Natural killer cell (primary cell): ENCODE measurements at regions of chr2 and their contacts with region 1.

Region 1: GRCh38 chr2:29014811-29015421 is 33.8 kb downstream of the TOGARAM2 start:
- DNase-seq: peak; percentile 74 to 89
- ATAC-seq: peak; percentile 52 to 74 (median 56)
- H3K4me3 ChIP-seq: peak overlapping the region; percentile 34
- H3K4me3 Mint-ChIP-seq: peak overlapping the region; percentile 94
- H3K27ac ChIP-seq: peak overlapping the region; percentile 100
- H3K27ac Mint-ChIP-seq: peak overlapping the region; percentile 100
- H3K4me1 ChIP-seq: peaks cover 84% of the 10 kb centered on the region
- H3K4me1 Mint-ChIP-seq: peaks cover 78 to 84% of the 10 kb centered on the region in 2 donors
- H3K27me3 ChIP-seq: no peaks in the 10 kb centered on the region
- H3K27me3 Mint-ChIP-seq: no peaks in the 10 kb centered on the region
- CTCF ChIP-seq: peak; percentile 50

Region 2: GRCh38 chr2:28621172-28622100 is 393.5 kb before region 1 on chr2:
- intact Hi-C with region 1: loop called (anchors 10 kb)
- DNase-seq: peak; percentile 53 to 95
- ATAC-seq: peak; percentile 77 to 89 (median 81)
- H3K4me3 ChIP-seq: no peak overlapping the region
- H3K4me3 Mint-ChIP-seq: peak overlapping the region; percentile 78
- H3K27ac ChIP-seq: peak overlapping the region; percentile 92
- H3K27ac Mint-ChIP-seq: peak overlapping the region; percentile 91 to 94
- H3K4me1 ChIP-seq: peaks cover 66% of the 10 kb centered on the region
- H3K4me1 Mint-ChIP-seq: peaks cover 60 to 65% of the 10 kb centered on the region in 2 donors
- H3K27me3 ChIP-seq: no peaks in the 10 kb centered on the region
- H3K27me3 Mint-ChIP-seq: no peaks in the 10 kb centered on the region
- CTCF ChIP-seq: no peak

Region 3: DNA sequence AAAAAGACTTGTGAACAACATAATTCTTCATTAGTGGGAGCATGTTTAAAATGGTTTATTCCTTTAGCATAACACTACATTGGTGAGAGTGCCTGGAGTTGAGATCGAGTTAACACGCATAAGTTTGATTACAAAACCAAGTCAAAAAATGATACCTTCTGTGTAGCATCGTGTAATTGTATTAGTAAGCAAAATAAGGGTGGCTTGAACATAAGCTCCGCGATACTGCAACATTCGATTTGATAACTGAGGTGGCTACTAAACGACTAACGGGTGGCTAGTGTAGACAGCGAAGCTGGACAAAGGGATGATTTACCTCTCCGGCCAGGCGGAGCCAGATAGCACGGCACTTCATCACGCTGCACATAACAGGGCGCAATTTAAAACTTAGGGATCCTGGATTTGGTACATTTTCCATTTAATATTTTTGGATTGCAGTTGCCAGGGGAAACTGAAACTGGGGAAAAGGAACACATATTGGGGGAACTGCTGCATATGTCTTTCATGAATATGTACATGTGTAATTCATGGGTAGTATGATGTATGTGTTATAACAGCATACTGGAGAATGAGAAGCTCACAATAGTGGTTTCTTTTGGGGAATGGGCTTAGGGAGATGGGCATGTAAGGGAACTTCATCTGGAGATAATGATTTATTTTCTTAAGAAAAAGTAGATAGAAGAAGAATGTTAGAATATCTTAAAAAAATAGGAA is 70.2 kb before region 1 on chr2:
- intact Hi-C with region 1: no loop called
- DNase-seq: no peak
- ATAC-seq: no peak
- H3K4me3 ChIP-seq: no peak overlapping the region
- H3K4me3 Mint-ChIP-seq: no peak overlapping the region
- H3K27ac ChIP-seq: no peak overlapping the region
- H3K27ac Mint-ChIP-seq: no peak overlapping the region
- H3K4me1 ChIP-seq: no peaks in the 10 kb centered on the region
- H3K4me1 Mint-ChIP-seq: no peaks in the 10 kb centered on the region
- H3K27me3 ChIP-seq: no peaks in the 10 kb centered on the region
- H3K27me3 Mint-ChIP-seq: no peaks in the 10 kb centered on the region
- CTCF ChIP-seq: no peak

Region 4: DNA sequence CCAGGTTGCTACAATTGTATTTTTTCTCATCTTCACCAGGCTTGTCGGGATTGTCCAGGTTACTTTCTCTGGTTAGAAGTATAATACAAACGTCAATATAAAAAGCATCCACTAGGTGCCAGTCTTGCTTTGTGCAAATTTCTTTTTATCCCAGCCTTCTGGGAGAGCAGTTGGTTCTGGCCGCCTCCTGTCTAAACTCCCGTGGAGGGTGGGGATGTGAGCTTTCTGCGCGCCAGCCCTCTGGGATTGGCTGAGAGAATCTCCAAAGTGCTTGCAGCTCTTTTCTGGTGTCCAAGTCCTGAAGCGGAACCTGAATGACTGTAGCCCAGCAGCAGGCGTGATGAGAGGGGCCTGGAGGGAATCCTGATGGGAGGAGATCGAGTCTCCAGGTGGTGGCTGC is 56.2 kb before region 1 on chr2:
- intact Hi-C with region 1: loop called (anchors 1 kb)
- DNase-seq: peak; percentile 25 to 78
- ATAC-seq: peak; percentile 63 to 94 (median 74)
- H3K4me3 ChIP-seq: no peak overlapping the region
- H3K4me3 Mint-ChIP-seq: no peak overlapping the region
- H3K27ac ChIP-seq: no peak overlapping the region
- H3K27ac Mint-ChIP-seq: peak overlapping the region in 1 of 2 donors; percentile 25
- H3K4me1 ChIP-seq: peaks cover 6% of the 10 kb centered on the region
- H3K4me1 Mint-ChIP-seq: peaks cover 6 to 12% of the 10 kb centered on the region in 2 donors
- H3K27me3 ChIP-seq: no peaks in the 10 kb centered on the region
- H3K27me3 Mint-ChIP-seq: peaks cover 0 to 3% of the 10 kb centered on the region in 2 donors
- CTCF ChIP-seq: peak; percentile 82

Region 5: GRCh38 chr2:28981016-28981441 is 33.9 kb before region 1 on chr2 and contains the start of gene TOGARAM2:
- intact Hi-C with region 1: no loop called
- DNase-seq: no peak
- ATAC-seq: no peak
- H3K4me3 ChIP-seq: no peak within 1 kb of the TSS
- H3K4me3 Mint-ChIP-seq: no peak within 1 kb of the TSS
- H3K27ac ChIP-seq: no peak within 1 kb of the TSS
- H3K27ac Mint-ChIP-seq: peak within 1 kb of the TSS; percentile 9 to 51
- H3K4me1 ChIP-seq: peaks cover 2% of the 10 kb centered on the region
- H3K4me1 Mint-ChIP-seq: peaks cover under 1 to 6% of the 10 kb centered on the region in 2 donors
- H3K27me3 ChIP-seq: no peaks in the 10 kb centered on the region
- H3K27me3 Mint-ChIP-seq: no peaks in the 10 kb centered on the region
- CTCF ChIP-seq: no peak
- total RNA-seq, gene TOGARAM2: 25.9 to 53.2 (median 30.8) TPM

Region 6: DNA sequence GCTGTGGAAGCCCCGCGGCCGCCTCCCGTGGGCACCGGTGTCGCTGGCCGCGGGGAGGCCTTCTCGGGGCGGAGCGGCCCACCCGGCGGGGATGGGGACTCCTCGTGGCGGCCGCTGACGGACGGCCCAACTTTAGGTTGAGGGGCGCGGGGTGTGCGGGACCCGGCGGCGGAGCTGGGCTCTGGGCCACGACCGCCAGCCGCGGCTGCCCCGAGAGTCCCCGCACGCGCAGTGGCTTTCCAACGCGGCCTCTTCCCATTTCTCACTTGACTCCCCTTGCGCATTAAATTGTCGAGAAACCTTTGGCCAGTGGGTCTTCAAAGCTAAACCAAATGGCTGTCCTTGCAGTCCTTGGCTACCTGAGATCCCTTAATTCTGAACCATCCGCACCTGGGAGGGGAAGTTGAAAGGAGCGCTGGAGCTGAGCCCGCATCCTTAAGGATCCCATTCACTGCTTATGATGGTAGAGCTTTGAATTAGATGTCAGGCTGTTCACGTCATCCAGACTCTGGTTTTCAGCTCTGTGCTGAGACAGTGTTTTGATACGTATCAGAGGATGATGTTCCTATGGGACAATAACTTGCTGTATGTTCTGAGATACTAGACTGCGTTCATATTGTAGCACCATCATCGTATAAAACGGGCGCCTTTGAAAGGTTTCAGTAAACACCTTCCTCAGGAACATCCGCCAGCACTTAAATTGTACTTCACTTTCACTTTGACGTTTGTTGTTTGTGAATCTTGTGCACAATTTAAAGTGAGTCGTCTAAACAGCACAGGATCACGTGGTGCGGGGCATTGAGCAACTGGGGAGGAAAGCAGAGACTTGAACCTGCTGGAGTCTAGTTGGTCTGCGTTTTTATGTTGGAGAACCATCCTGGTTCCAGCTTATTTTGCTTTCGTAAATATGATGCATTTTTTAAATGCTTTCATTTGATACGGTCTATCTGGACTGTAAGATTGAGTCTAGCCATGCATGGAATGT is 101.2 kb after region 1 on chr2:
- intact Hi-C with region 1: loop called (anchors 1 kb)
- DNase-seq: peak; percentile 65 to 86
- ATAC-seq: peak; percentile 51 to 64 (median 59)
- H3K4me3 ChIP-seq: peak overlapping the region; percentile 88
- H3K4me3 Mint-ChIP-seq: peak overlapping the region; percentile 91
- H3K27ac ChIP-seq: peak overlapping the region; percentile 95
- H3K27ac Mint-ChIP-seq: peak overlapping the region; percentile 93
- H3K4me1 ChIP-seq: peaks cover 14% of the 10 kb centered on the region
- H3K4me1 Mint-ChIP-seq: peaks cover 45 to 59% of the 10 kb centered on the region in 2 donors
- H3K27me3 ChIP-seq: no peaks in the 10 kb centered on the region
- H3K27me3 Mint-ChIP-seq: peaks cover 0 to 9% of the 10 kb centered on the region in 2 donors
- CTCF ChIP-seq: no peak

Region 7: DNA sequence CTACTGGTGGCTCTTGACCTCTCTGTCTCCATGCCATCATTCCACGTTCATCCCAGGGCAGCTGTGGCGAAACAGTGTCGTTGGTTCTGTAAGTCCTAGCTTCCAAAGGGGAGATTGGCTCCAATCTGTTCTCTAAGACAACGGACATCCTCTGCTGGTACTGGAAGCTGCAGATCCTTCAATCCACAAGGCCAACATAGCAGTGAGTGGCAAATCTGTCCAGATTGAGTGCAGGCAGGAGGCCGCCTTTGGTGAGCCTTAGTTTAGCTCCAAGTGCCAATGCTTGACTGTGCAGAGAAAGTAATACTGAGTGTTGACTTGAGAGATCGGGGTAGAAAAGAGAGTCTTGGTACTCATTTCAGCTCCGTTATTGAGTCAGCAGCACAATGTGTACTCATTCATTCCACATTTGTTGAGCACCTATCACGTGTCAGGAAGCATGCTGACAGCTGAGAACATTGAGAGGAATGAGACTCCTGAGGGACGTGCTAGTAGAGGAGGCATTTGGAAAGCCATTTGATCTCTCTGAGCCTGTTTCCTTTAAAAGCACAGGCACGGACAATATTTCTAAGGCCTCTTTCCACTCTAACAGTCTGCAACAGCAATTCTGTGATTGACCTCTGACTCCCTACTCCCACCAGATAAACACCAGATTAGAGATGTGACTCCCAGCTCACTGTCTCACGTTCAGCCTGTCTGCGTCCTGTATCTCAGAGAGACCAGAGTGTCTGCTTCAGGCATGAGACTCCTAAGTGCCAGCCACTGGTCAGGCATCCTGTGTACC is 406.3 kb after region 1 on chr2:
- intact Hi-C with region 1: no loop called
- DNase-seq: no peak
- ATAC-seq: no peak
- H3K4me3 ChIP-seq: no peak overlapping the region
- H3K4me3 Mint-ChIP-seq: no peak overlapping the region
- H3K27ac ChIP-seq: no peak overlapping the region
- H3K27ac Mint-ChIP-seq: no peak overlapping the region
- H3K4me1 ChIP-seq: no peaks in the 10 kb centered on the region
- H3K4me1 Mint-ChIP-seq: no peaks in the 10 kb centered on the region
- H3K27me3 ChIP-seq: no peaks in the 10 kb centered on the region
- H3K27me3 Mint-ChIP-seq: peaks cover 9 to 36% of the 10 kb centered on the region in 2 donors
- CTCF ChIP-seq: no peak

Region 8: DNA sequence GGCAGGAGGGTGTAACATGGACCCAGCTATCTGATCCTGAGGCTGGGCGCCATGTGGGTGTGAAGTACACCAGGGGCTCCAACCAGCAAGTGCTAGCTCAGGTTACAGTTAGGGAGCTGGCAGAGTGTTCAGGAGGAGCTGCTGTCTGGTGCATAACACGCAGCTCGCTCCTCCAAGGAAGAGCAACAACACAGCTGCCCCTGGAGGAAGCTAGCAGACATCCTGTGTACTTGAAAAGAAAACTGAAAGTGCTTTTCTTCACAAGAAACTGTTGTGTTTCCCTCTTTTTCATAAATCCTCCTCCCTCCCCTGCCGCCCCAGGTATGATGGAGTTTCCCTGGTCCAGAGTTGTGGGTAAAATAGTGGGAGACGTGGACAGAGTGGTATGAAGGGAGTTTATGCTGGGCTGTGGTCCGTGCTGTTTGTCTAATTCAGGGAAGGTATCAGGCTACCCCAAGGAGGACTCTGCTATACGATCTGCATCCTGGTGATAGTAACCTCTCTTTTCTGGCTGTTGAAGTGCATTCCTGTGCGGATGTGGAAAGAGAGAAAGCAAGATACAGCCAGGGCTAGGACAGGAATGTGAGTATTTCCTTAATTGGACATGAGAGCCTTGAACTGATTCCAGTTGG is 1210.3 kb after region 1 on chr2:
- intact Hi-C with region 1: loop called (anchors 10 kb)
- DNase-seq: peak; percentile 42 to 83
- ATAC-seq: peak; percentile 59 to 76 (median 61)
- H3K4me3 ChIP-seq: peak overlapping the region; percentile 49
- H3K4me3 Mint-ChIP-seq: peak overlapping the region; percentile 96
- H3K27ac ChIP-seq: peak overlapping the region; percentile 97
- H3K27ac Mint-ChIP-seq: peak overlapping the region; percentile 87 to 100
- H3K4me1 ChIP-seq: peaks cover 66% of the 10 kb centered on the region
- H3K4me1 Mint-ChIP-seq: peaks cover 72 to 86% of the 10 kb centered on the region in 2 donors
- H3K27me3 ChIP-seq: no peaks in the 10 kb centered on the region
- H3K27me3 Mint-ChIP-seq: no peaks in the 10 kb centered on the region
- CTCF ChIP-seq: no peak